ENCODE measurements at regions of chr10 and their contacts with region 1.

Region 1: GRCh38 chr10:78312197-78313047 is 278.8 kb downstream of the RPS24 start:
- H3K4me3 Mint-ChIP-seq: no peak overlapping the region
- H3K27ac Mint-ChIP-seq: no peak overlapping the region
- H3K4me1 Mint-ChIP-seq: peaks cover 4% of the 10 kb centered on the region
- H3K27me3 Mint-ChIP-seq: peaks cover 8% of the 10 kb centered on the region

Region 2: GRCh38 chr10:78047314-78047891 is 265.0 kb before region 1 on chr10:
- intact Hi-C with region 1: loop called (anchors 5 kb)
- H3K4me3 Mint-ChIP-seq: no peak overlapping the region
- H3K27ac Mint-ChIP-seq: no peak overlapping the region
- H3K4me1 Mint-ChIP-seq: peaks cover 44% of the 10 kb centered on the region
- H3K27me3 Mint-ChIP-seq: no peaks in the 10 kb centered on the region